ENCODE measurements at regions of chr5 and their contacts with region 1.

Region 1: DNA sequence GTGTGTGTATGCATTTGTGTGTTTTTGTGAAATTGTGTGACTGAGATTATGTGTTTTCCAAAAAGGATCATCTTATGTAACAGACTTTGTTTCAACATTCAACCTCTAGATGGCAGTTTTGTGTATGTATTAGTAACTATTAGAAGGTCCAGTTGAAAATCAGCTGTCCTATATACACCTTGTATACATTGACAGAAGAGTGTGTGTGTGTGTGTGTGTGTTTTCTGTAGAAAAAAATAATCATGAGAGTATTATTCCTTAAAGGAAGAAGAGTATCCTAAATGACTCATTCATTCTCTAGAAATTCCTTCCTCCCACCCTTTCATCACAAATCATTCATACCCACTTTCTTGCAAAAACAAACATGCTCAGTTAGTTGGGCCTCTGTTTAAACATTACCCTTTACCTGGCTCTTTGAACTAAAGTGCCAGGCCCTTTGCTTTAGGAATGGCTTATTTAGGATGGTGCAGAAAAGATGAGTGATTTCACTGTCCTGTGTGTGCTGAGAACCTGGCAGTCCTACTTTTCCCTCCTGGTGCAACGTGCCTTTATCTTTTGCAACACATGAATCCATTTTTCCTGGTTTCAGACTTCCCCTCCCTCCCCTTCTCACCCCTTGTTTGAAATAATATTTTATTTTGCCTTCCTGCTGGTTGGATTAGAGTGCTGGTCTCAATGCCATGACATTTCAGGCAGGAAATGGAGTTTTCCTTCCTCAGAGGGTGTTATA is 152.2 kb downstream of the ARHGAP26 start:
- DNase-seq: no peak
- ATAC-seq: peak; percentile 53

Region 2: DNA sequence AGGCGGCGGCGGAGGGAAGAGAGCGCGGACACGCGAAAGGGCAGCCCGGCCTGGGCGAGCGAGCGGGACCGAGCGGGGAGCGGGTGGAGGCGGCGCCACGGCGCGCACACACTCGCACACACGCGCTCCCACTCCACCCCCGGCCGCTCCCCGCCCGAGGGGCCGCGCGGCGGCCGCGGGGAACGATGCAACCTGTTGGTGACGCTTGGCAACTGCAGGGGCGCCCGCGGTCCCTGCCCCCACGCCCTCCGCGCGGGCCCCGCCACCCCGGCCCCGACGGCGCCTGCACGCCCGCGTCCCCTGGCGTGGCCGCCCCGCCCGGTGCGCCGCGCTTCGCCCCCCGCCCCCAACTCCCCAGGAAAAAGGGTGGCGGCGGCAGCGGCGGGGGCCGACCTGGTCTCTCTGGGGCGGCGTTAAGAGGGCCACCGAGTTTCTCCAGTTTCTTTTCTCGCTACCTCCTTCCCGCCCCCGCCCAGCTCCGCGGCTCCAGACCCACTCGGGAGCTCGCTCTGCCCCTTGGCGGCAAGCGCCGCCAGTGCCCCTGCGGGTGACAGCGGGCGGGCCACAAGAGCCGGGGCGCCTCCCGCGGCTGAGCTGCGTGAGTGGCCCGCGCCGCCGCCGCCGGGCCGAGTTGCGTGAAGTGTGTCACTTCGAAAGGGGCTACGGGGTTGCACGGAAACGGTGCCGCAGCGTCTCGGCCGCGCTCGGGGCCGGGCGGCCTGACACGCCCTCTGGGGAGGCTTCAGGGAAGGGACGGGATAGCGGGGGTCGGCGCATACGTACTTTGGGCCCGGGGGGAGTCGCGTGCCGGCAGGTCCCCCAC is 481.4 kb after region 1 on chr5 and contains the start of gene NR3C1:
- intact Hi-C with region 1: loop called in 1 of 2 experiments (anchors 10 kb)
- DNase-seq: peak; percentile 76 to 85
- ATAC-seq: peak; percentile 80
- total RNA-seq, gene NR3C1: 19.9 to 26.3 TPM

Region 3: DNA sequence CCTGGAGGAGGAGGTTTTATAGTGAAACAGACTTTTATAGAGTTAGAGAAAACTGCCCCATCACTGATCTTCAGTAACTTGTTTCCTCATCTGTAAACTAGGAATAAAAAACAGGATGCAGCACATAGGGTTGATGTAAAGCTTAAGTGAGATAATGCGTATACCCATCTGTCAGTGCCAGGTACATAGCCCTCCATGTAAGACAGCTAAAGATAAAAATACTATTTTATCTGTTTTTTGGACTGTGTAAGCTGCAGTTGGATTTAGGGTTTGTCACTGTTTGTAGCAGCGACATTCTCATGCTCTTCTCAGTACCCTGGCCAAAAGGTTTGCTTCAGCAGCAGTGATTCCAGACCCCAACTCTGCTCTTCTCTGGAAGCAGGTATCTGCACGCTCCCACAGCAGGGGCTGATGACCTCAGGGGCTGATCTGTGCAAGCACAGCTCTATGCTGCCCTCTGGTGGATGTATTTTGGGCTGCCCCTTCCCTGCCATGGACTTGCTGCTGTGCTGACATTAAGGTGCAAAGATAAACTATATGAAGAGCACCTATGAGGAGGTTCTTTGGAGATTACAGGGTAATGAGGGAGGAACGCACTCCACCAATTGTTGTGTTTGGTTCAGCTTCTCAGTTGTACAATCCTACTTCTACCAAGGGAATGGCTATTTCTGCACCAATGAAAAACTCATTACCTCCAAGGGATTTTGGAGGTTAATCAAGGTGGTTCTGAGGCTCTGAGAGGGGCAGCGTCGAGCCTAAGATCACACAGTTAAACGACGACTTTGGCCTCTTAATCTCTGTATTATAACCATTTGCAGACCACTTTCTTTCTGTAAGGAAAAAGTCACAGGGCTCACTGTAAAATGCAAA is 902.7 kb after region 1 on chr5:
- intact Hi-C with region 1: loop called in 1 of 2 experiments (anchors 5 kb)
- DNase-seq: peak; percentile 58 to 88
- ATAC-seq: peak; percentile 90